ENCODE measurements at regions of chr10 and their contacts with region 1.

Region 1: DNA sequence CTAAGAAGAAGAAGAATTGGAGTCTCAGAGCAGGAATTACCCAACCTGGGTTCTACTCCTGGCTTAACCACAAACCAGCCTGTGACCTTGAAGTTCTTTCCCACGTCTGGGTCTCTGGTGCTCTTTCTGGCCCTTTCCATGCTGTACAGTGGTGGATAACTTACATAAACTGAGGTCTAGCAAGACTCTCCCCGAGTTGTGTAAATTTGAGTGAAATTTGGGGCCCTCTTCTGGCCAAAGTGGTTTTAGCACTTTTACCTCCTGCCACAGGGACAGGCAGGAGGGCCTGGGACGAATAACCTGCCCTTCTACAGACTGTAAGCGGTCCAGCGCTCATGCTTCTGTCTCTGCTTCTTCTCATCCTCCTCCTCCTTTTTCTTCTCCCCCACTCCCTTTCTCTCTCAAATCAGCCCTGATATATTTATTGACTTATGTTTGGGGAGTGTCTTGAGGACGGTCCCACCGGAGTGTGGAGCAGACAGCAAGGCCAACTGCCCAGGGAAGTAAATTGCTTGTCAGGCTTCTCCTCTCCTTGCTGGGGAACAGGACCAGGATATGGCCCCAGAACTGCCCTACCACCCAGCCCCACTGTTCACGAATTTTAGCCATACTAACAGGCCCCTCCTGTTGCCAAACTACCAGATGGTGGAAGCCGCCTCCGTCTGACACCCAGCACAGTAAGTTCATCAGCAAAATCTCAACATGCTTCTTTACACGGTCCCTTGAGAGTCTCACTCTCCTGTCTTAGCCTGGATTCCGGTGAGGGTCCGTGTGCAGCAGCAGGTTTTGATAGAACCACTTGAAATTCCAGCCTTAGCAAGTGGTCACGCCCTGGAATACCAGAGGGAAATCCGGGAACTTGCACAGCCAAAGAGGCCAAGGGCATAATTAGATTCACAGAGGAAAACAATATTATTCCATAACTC is 4.0 kb upstream of the SH3PXD2A start:
- DNase-seq: no peak
- H3K4me3 ChIP-seq: no peak overlapping the region
- H3K27ac ChIP-seq: no peak overlapping the region
- H3K4me1 ChIP-seq: peaks cover 17% of the 10 kb centered on the region
- H3K27me3 ChIP-seq: no peaks in the 10 kb centered on the region
- CTCF ChIP-seq: peak; percentile 82

Region 2: DNA sequence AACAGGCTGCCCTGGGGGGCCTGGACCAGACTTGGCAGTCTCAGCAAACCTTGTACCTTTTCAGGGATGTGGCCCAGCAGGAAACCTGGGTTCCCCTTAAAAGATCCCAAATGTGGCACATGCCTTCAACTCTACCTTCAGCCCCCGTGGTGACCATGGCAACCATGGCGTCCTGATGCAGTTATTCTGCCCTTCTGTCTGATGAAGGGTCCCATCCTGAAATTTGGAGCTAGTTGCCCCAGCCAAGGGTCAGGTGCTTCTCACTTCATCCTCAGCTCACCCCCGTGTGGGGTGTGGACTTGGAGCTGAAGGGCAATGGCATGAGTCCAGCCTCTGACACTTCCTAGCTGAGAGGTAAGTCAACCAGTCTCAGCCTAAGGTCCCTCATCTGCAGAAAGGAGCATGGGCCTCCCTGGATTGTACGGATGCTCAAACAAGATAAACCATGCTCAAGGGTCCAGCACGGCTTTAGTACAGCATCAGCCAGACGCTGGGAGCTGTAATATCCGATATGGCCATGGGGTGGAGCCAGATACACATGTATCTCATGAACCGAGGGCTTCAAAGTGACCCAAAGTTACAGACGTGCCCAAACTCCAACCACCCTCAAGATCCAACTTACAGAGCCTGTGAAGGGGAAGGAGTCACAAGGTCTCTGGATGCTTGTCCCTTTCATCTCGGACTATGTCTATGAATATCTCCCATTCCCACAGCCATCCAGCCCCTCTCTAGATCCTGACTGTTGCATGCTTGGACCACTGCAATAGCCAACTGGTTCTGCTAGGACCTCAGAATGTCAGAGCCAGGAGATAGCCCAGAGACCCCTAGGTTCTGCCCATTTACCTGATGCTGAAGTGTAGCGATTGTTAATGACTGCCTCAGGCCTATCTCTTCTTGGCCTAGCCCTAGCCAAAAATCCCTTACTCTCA is 146.6 kb before region 1 on chr10:
- intact Hi-C with region 1: loop called (anchors 2 kb)
- DNase-seq: peak; percentile 77
- H3K4me3 ChIP-seq: no peak overlapping the region
- H3K27ac ChIP-seq: no peak overlapping the region
- H3K4me1 ChIP-seq: peaks cover 17% of the 10 kb centered on the region
- H3K27me3 ChIP-seq: no peaks in the 10 kb centered on the region
- CTCF ChIP-seq: peak; percentile 95

Region 3: DNA sequence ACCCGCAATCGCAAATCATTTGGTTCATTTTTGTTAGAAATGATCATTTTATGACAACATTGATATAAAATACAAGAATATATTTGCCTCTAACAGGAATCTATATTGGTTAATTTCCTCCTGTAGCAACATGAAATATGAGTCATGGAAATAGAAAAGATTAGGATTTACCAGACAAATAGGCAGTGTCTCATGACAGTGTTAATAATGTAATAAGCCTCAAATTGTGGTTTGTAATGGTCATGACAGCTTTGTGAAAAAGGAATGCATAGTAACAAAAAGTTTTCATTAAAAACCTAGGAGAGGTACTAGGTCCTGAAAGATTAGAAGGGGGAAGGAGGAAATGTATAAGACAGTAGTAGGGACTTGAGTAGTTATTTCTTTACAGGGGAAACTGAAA is 99.6 kb after region 1 on chr10:
- intact Hi-C with region 1: no loop called
- DNase-seq: no peak
- H3K4me3 ChIP-seq: no peak overlapping the region
- H3K27ac ChIP-seq: no peak overlapping the region
- H3K4me1 ChIP-seq: peaks cover 5% of the 10 kb centered on the region
- H3K27me3 ChIP-seq: no peaks in the 10 kb centered on the region
- CTCF ChIP-seq: no peak

Measured in left ventricle myocardium inferior (tissue), 1 donor.